H1 (cell line): ENCODE measurements at regions of chr1 and their contacts with region 1.

Region 1: DNA sequence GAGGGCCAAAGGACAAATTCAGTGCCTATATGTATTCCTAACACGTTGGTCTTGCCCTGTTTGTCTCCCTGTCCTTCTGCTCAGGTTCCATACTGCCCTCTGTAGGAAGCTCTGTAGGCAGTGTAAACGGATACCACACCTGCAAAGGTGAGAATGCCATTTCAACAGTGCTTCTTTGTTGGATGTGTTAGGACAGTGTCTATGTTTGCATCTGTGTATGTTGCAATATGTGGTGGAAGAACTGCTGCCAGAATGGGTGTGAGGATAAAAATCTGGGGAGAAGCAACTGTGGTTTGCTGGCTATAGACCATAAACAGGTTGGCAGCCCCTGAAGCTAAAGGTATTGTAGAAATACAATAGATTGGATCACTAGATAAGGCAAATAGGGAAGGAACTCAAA is 113.1 kb upstream of the BMP8A start:
- DNase-seq: no peak
- H3K4me3 ChIP-seq: no peak overlapping the region
- H3K27ac ChIP-seq: no peak overlapping the region
- H3K4me1 ChIP-seq: no peaks in the 10 kb centered on the region
- H3K27me3 ChIP-seq: no peaks in the 10 kb centered on the region
- CTCF ChIP-seq: peak; percentile 43 to 92 (median 46); a peak in 3 of 4 replicates
- EP300 ChIP-seq: no peak
- POLR2A ChIP-seq: no peak
- RAD21 ChIP-seq: peak; percentile 50 to 55

Region 2: GRCh38 chr1:39204441-39205081 is 173.8 kb before region 1 on chr1 and contains the start of gene MACF1:
- CTCF ChIA-PET with region 1: no interaction called
- POLR2A ChIA-PET with region 1: no interaction called
- DNase-seq: no peak
- H3K4me3 ChIP-seq: peak within 1 kb of the TSS in 1 of 4 experiments; percentile 19; a peak in 3 of 8 replicates
- H3K27ac ChIP-seq: no peak within 1 kb of the TSS; the same call in 1 of the 2 replicates
- H3K4me1 ChIP-seq: peaks cover 8 to 15% (median 10%) of the 10 kb centered on the region in 4 experiments; a peak in 6 of 7 replicates
- H3K27me3 ChIP-seq: no peaks in the 10 kb centered on the region
- CTCF ChIP-seq: peak in 1 of 3 experiments; percentile 6; a peak in 1 of 4 replicates
- EP300 ChIP-seq: no peak
- POLR2A ChIP-seq: no peak
- RAD21 ChIP-seq: peak in 1 of 2 experiments; percentile 24; a peak in 1 of 4 replicates
- total RNA-seq, gene MACF1: 261 and 285 TPM in 2 replicates

Region 3: DNA sequence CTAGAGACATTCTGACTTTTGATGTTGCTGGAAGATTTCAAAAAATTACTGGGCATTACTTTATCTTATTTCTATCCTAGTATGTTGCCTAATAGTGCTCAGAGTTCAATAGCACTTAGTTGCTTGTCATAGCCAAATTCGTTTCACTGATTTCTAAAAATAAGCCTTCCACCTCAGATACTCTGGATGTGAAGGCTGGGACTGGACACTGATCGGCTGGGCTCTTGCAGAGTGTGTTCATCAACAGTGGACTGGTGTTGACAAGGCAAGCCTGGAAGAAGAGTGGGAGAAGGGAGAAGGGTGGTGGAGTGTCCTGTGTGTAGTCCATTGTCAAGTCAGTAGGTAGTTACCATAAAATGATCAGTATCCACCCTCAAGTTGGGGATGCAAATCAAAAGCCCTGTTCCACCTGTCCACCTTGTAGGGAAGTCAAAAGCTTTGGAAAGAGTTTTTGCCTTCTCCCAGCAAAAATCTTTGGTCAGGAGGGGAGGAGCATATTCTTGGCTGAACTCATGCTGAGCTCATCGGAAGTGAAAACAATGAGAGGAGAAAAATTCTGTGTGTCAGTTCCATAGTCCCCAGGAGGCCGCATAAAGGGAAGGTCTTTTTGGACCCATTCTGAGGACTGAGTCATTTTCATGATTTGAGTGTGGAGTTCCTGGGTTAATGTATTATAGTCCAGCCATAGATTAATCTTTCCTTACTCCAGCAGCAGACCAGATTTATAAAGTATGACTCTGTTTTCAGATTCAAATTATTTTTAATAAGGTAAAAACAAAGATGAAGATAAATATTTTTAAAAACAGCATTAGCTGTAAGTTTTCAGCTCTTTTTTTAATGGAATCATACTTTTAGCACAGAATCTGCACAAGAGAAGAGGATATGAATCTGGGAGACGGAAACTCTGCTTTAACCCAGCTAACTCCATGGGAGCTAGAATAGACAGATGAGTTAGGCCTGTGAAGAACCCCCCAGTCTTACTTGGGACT is 13.6 kb after region 1 on chr1:
- CTCF ChIA-PET with region 1: interaction called, 18 read pairs
- POLR2A ChIA-PET with region 1: interaction called, 3 read pairs
- DNase-seq: no peak
- H3K4me3 ChIP-seq: peak overlapping the region in 1 of 4 experiments; percentile 11; a peak in 1 of 8 replicates
- H3K27ac ChIP-seq: no peak overlapping the region
- H3K4me1 ChIP-seq: peaks cover 3 to 14% (median 8%) of the 10 kb centered on the region in 4 experiments; a peak in 5 of 7 replicates
- H3K27me3 ChIP-seq: no peaks in the 10 kb centered on the region
- CTCF ChIP-seq: no peak
- EP300 ChIP-seq: no peak
- POLR2A ChIP-seq: no peak
- RAD21 ChIP-seq: no peak

Region 4: GRCh38 chr1:39420493-39420892 is 42.1 kb after region 1 on chr1:
- CTCF ChIA-PET with region 1: interaction called, 10 read pairs
- POLR2A ChIA-PET with region 1: no interaction called
- DNase-seq: no peak
- H3K4me3 ChIP-seq: no peak overlapping the region
- H3K27ac ChIP-seq: no peak overlapping the region
- H3K4me1 ChIP-seq: peaks cover 0 to 3% (median 0%) of the 10 kb centered on the region in 4 experiments; a peak in 2 of 7 replicates
- H3K27me3 ChIP-seq: no peaks in the 10 kb centered on the region
- CTCF ChIP-seq: no peak
- EP300 ChIP-seq: no peak
- POLR2A ChIP-seq: no peak
- RAD21 ChIP-seq: no peak